Activated CD4-positive, alpha-beta memory T cell treated with anti-CD3 and anti-CD28 coated beads, Interleukin-2, amount 10 ng/mL, durations not matched to agents 7 days and 5 days (primary cell): ENCODE measurements at regions of chr11 and their contacts with region 1.

Region 1: GRCh38 chr11:6377902-6378639 is 12.2 kb upstream of the SMPD1 start:
- DNase-seq: peak; percentile 34
- H3K4me3 Mint-ChIP-seq: peak overlapping the region; percentile 24
- H3K27ac Mint-ChIP-seq: peak overlapping the region; percentile 87
- H3K4me1 Mint-ChIP-seq: peaks cover 35% of the 10 kb centered on the region
- H3K27me3 Mint-ChIP-seq: no peaks in the 10 kb centered on the region

Region 2: GRCh38 chr11:6142936-6143335 is 235.1 kb before region 1 on chr11:
- CTCF ChIA-PET with region 1: no interaction called
- POLR2A ChIA-PET with region 1: no interaction called
- DNase-seq: no peak
- H3K4me3 Mint-ChIP-seq: no peak overlapping the region
- H3K27ac Mint-ChIP-seq: no peak overlapping the region
- H3K4me1 Mint-ChIP-seq: no peaks in the 10 kb centered on the region
- H3K27me3 Mint-ChIP-seq: peaks cover 10% of the 10 kb centered on the region

Region 3: DNA sequence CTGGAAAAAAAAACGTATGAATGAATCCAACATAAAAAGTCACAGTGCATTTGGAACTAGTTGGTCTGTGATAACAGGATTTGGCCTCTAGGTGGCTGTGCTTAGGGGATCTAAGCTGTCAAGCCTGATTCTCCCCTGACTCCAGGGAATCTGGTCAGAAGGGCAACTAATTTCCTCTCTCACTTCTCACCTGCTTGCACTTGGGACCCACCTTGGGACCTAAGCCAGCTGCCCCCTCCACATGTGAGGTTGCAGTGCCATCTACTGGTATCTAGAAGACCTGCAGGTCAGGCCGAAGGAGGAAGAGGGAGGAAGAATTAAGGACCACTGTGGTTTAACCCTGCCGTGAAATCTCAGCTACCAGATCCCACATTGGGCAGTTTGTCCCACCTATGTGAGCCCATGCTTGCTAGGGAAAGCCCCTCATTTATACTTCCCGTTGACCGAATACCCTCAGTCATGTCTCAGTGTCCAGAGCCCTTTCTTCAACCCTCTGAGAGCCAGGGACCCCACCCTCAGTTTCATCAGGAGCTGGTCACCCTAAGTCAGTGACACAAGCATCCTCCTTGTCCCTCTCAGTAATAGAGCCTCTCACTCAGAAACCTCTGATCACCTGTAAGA is 24.6 kb before region 1 on chr11:
- CTCF ChIA-PET with region 1: interaction called, 24 read pairs
- POLR2A ChIA-PET with region 1: no interaction called
- DNase-seq: peak; percentile 62
- H3K4me3 Mint-ChIP-seq: no peak overlapping the region
- H3K27ac Mint-ChIP-seq: no peak overlapping the region
- H3K4me1 Mint-ChIP-seq: peaks cover 19% of the 10 kb centered on the region
- H3K27me3 Mint-ChIP-seq: no peaks in the 10 kb centered on the region

Region 4: GRCh38 chr11:6419009-6419631 is 41.0 kb after region 1 on chr11 and contains the start of gene APBB1:
- CTCF ChIA-PET with region 1: interaction called, 36 read pairs
- POLR2A ChIA-PET with region 1: interaction called, 19 read pairs
- DNase-seq: peak; percentile 78
- H3K4me3 Mint-ChIP-seq: peak within 1 kb of the TSS; percentile 75
- H3K27ac Mint-ChIP-seq: peak within 1 kb of the TSS; percentile 17
- H3K4me1 Mint-ChIP-seq: peaks cover 4% of the 10 kb centered on the region
- H3K27me3 Mint-ChIP-seq: peaks cover 28% of the 10 kb centered on the region
- total RNA-seq, gene APBB1: 56.0 to 57.6 TPM

Region 5: DNA sequence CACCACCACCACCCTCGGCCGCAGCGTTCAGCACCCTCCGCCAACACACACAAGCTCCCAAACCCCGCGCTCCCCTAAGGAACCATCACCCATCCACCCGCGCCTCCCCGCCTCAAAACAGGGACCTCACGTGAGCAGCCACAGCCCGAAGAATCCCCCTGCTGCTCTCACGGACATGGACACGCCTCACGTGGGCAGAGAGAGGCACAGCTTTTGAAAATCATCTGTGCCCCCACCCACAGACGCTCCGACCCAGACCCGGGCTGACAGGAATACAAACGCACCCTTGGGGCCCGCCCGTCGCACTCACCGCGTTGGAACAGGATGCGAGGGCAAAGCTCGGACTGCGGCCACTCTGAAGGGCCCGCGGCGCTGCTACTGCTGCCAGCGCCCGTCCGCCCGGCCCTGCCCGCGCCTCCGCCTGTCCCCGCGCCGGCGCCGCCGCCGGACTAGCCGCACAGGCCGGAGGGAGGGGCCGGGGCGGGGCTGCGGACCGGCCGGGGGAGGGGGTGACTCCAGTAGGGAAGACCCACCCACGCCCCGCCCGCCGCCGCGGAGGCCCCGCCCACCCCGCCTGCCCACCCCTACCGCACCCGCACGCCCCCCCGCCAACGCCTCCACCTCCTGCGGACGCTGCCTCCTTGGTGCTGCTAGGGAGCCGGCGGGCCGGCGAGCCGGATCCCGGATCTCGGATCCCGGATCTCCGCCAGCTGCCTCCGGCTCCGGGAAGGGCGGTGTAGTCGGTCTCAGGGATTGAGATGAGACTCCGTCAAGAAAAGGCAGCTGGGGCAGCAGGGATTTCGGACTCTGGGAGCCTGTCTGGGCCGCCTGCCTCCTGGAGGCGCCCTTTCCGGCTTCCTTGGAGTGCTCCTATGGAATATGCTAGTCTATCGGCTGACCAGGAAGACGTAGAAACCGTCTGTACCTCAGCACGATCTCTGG is 95.7 kb after region 1 on chr11 and contains the start of gene TRIM3:
- CTCF ChIA-PET with region 1: interaction called, 26 read pairs
- POLR2A ChIA-PET with region 1: interaction called, 11 read pairs
- DNase-seq: peak; percentile 67
- H3K4me3 Mint-ChIP-seq: peak within 1 kb of the TSS; percentile 76
- H3K27ac Mint-ChIP-seq: no peak within 1 kb of the TSS
- H3K4me1 Mint-ChIP-seq: peaks cover 20% of the 10 kb centered on the region
- H3K27me3 Mint-ChIP-seq: peaks cover 4% of the 10 kb centered on the region
- total RNA-seq, gene TRIM3: 7.9 to 9.9 TPM

Region 6: GRCh38 chr11:6505577-6506240 is 127.6 kb after region 1 on chr11:
- CTCF ChIA-PET with region 1: interaction called, 122 read pairs
- POLR2A ChIA-PET with region 1: interaction called, 6 read pairs
- DNase-seq: no peak
- H3K4me3 Mint-ChIP-seq: no peak overlapping the region
- H3K27ac Mint-ChIP-seq: no peak overlapping the region
- H3K4me1 Mint-ChIP-seq: peaks cover 4% of the 10 kb centered on the region
- H3K27me3 Mint-ChIP-seq: no peaks in the 10 kb centered on the region

Region 7: GRCh38 chr11:6667733-6668374 is 289.8 kb after region 1 on chr11:
- CTCF ChIA-PET with region 1: interaction called, 11 read pairs
- POLR2A ChIA-PET with region 1: no interaction called
- DNase-seq: peak; percentile 57
- H3K4me3 Mint-ChIP-seq: no peak overlapping the region
- H3K27ac Mint-ChIP-seq: peak overlapping the region; percentile 2
- H3K4me1 Mint-ChIP-seq: peaks cover 59% of the 10 kb centered on the region
- H3K27me3 Mint-ChIP-seq: peaks cover 6% of the 10 kb centered on the region